Dendritic cell treated with granulocyte-macrophage colony-stimulating factor and Interleukin-4, amounts not matched to agents 40 ng/mL and 50 ng/mL, for 4 days (primary cell): ENCODE measurements at regions of chr4 and their contacts with region 1.

Region 1: DNA sequence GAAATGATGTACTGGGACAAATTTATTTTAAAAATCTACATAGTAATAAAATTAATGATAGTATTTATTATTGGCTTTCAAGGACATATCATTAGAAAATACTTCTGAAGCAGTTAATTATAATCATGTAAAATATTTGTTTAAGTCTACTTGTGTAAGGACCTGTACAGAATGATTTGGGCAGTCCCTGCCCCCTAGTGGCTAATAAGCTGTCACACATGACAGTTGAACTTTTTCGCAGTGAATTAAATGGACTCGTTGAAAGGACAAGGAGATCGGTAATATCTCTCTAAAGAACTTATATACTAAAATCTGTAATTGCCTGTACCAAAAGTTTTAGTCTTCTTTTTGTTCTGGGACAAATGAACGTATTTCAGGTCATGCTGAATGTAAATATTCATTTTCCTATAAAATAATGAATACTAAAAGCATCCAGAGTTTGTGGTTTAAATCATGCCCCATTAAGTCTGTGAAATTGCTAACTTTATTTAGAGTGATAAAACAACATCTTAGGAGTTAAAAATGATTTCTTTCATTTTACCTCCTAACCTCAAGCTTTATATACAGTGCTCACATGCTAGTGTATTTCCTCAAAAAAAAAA is 13.6 kb downstream of the EXOC1 start:
- H3K4me3 Mint-ChIP-seq: no peak overlapping the region
- H3K27ac Mint-ChIP-seq: peak overlapping the region; percentile 56
- H3K4me1 Mint-ChIP-seq: peaks cover 17% of the 10 kb centered on the region
- H3K27me3 Mint-ChIP-seq: no peaks in the 10 kb centered on the region

Region 2: GRCh38 chr4:55409468-55410171 is 457.5 kb before region 1 on chr4:
- intact Hi-C with region 1: loop called (anchors 5 kb)
- H3K4me3 Mint-ChIP-seq: no peak overlapping the region
- H3K27ac Mint-ChIP-seq: peak overlapping the region; percentile 80
- H3K4me1 Mint-ChIP-seq: peaks cover 38% of the 10 kb centered on the region
- H3K27me3 Mint-ChIP-seq: no peaks in the 10 kb centered on the region

Region 3: DNA sequence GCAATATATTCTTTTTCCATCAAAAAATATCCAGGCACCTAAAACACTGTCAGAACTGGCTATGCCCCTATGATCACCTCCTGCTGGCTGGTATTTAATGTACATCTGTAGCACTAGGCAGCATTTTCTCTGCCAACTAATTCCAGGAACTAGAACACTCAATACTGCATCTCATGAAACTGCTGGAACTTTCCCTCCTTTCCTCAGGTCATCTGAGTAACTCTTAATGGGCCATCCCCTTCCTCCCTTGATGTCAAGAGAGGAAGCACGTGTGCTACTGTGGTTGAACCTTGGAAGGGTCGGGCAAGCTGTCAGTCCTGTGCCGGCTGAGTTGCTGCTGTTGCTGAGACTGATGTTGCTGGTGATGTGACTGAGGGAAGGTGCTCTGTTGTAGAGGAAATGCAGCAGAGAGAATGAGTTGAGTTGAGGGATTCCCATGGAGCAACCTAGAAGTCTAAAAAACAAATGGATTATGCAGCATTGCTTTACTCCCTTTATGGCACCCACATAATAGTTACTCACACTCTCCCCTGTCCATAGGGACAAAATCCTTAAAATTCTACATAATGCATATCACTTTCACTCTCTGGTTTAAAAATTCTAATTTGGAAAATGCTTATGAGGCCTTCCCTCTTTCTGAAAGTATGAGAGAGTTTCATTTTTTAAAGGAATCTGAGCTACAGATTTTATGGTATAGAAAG is 431.8 kb before region 1 on chr4:
- intact Hi-C with region 1: loop called (anchors 5 kb)
- H3K4me3 Mint-ChIP-seq: no peak overlapping the region
- H3K27ac Mint-ChIP-seq: no peak overlapping the region
- H3K4me1 Mint-ChIP-seq: no peaks in the 10 kb centered on the region
- H3K27me3 Mint-ChIP-seq: no peaks in the 10 kb centered on the region

Region 4: DNA sequence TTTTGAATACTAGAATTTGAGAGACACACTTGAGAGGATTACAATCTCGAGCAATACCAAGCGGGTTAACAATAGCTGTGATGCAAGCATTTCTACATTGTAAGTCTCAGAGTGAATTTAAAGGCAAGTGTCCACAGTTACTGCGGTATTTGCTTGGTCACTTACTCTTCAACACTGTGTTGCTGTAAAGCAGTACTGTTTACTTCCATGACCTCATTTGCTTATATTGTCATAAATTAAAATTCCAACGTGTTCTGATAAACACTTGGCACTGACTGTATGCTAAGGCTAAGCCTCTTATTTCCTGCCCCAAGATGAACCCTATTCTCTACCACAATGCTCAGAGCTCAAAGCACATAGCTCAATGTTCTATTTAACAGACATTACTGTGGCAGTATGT is 36.4 kb before region 1 on chr4:
- intact Hi-C with region 1: no loop called
- H3K4me3 Mint-ChIP-seq: no peak overlapping the region
- H3K27ac Mint-ChIP-seq: no peak overlapping the region
- H3K4me1 Mint-ChIP-seq: no peaks in the 10 kb centered on the region
- H3K27me3 Mint-ChIP-seq: peaks cover 6% of the 10 kb centered on the region

Region 5: DNA sequence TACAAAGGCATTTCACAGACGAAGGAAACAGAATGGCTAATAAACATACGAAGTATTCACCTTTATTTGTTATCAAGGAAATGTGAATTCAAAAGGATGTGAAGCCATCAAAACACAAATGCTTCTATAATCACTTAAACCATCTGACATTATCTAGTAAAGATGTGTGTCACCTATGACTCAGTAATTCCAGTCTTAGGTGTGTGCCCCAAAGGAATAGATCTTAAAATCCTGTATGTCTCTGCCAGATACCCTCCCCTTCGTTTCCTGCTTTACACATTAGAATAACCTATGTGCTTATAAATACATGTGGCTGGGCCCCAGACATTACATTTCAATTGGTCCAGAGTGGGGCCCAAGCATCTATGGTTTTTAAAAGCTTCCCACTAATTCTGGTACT is 39.9 kb after region 1 on chr4:
- intact Hi-C with region 1: no loop called
- H3K4me3 Mint-ChIP-seq: no peak overlapping the region
- H3K27ac Mint-ChIP-seq: no peak overlapping the region
- H3K4me1 Mint-ChIP-seq: no peaks in the 10 kb centered on the region
- H3K27me3 Mint-ChIP-seq: no peaks in the 10 kb centered on the region

Region 6: GRCh38 chr4:55973650-55974049 is 106.6 kb after region 1 on chr4:
- intact Hi-C with region 1: no loop called
- H3K4me3 Mint-ChIP-seq: no peak overlapping the region
- H3K27ac Mint-ChIP-seq: no peak overlapping the region
- H3K4me1 Mint-ChIP-seq: no peaks in the 10 kb centered on the region
- H3K27me3 Mint-ChIP-seq: no peaks in the 10 kb centered on the region

Region 7: DNA sequence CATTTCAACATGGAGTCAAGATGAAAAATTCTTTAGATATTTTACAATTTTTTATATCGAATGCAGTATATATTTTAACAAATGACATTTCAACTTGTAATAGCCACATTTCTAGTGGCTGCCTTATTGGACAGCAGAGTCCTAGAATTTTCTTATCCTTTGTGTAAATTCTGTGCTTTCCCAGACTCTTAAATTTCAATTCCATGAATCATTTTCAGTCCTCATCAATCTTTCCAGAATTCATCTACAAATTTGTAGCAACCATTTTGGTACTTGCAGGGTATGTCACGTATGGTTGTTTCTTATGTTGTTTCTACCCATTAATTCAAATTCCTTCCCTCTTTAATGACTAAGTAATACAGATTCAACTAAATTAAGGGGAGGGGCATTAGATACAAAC is 571.7 kb after region 1 on chr4:
- intact Hi-C with region 1: no loop called
- H3K4me3 Mint-ChIP-seq: no peak overlapping the region
- H3K27ac Mint-ChIP-seq: no peak overlapping the region
- H3K4me1 Mint-ChIP-seq: peaks cover 38% of the 10 kb centered on the region
- H3K27me3 Mint-ChIP-seq: no peaks in the 10 kb centered on the region

Region 8: DNA sequence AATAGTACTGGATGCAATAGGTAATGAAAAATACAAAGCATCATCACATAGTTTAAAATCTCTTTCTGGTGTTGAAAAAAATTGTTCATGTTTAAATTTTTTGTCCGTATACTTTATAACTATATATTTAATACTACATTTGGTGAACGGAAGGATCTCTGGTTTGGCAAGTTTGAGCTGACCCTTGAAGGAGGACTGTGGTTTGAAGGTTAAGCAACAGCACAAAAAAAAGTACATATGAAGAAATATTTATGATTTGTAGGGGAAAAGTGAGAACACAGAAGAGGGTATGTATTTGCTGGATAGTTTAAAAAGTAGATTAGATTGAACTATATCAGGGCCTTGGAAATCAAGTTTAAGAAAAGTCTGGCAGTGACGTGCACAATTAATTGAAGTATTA is 613.6 kb after region 1 on chr4:
- intact Hi-C with region 1: loop called (anchors 10 kb)
- H3K4me3 Mint-ChIP-seq: no peak overlapping the region
- H3K27ac Mint-ChIP-seq: no peak overlapping the region
- H3K4me1 Mint-ChIP-seq: no peaks in the 10 kb centered on the region
- H3K27me3 Mint-ChIP-seq: no peaks in the 10 kb centered on the region